ENCODE measurements at regions of chrX and their contacts with region 1.

Region 1: DNA sequence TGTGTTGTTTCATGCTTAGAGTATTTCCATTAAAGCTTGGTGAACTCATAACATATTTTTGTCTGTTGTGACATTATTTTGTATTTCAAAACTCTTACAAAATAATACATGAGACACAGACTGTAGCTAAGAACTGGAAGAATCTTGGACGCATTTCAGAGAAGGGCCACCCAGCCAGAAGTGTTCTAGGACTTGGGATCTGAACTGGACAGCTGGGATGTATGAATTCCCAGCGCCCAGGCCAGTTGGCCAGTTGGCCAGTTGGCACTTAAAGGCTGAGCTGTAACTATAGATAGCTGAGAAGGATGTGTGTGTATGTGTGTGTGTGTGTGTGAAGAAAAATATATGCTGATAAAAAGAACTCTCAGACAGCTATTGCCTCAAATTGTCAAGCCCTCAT is 193.4 kb upstream of the GPR101 start:
- DNase-seq: peak in 1 of 2 donors; percentile 12
- H3K4me3 ChIP-seq: no peak overlapping the region
- CTCF ChIP-seq: no peak
- POLR2A ChIP-seq: no peak

Region 2: DNA sequence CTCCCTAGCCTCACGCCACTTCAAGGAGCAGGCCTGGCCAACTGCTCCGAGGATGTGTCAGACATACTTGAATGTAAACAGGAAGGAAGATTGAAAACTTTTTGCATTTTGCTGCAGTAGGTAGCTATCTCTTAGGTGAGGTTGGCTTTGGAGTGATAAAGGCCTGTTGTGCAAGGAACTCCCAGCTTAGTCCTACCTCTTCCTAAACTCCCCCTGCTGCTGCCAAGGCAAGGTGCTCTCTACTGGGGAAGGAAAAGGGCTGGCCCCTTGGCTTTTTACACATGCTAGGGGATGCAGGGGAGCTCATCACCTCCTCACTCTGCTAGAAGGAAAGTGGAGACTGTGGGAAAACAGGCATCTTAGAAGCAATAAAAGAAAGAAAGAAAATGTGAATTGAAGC is 750.1 kb before region 1 on chrX:
- intact Hi-C with region 1: no loop called
- DNase-seq: no peak
- H3K4me3 ChIP-seq: no peak overlapping the region
- CTCF ChIP-seq: no peak
- POLR2A ChIP-seq: no peak

Region 3: DNA sequence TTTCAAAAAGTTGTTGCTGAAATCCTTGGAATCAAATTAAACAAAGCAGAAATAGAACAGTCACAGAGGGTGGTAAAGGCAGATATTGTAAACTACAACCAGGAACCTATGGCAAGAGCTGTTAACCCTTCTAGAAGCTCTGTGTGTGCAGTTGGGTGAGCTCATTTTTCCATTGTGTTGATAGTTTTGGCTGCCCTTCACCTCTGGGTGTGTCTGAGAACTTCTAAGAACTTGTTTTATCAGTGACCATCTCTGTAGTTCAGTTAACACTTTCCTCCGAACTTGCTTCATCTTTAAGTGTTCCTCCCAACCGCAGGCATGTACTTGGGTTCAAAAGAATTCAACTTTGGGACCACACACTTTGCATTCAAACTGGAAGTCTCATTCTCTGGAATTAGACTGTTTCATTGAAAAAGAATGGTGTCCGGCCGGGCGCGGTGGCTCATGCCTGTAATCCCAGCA is 379.2 kb before region 1 on chrX:
- intact Hi-C with region 1: loop called (anchors 5 kb)
- DNase-seq: no peak
- H3K4me3 ChIP-seq: no peak overlapping the region
- CTCF ChIP-seq: no peak
- POLR2A ChIP-seq: no peak

Region 4: DNA sequence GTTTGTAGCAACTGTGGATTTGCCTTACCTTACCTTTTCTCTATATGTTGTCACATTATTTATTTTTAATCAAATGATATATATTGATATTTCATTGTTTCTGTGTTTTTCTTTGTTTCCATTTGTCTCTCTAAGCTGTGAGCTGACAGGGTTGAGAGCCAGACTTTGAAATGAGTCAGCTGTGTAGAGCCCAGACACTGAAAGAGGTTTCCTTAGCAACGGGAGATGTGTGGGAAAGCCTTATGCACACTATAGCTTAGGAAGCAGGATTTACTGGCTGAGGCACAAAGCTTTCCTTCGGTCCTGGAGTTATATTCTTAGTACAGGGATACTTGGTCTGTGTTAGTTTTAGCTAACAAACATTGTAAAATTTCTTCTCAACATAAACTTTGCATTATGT is 1292.2 kb after region 1 on chrX:
- intact Hi-C with region 1: no loop called
- DNase-seq: no peak
- H3K4me3 ChIP-seq: no peak overlapping the region
- CTCF ChIP-seq: no peak
- POLR2A ChIP-seq: no peak

Measured in lower leg skin (tissue), 4 donors.